Heart right ventricle (tissue), 16 donors: ENCODE measurements at regions of chr2 and their contacts with region 1.

Region 1: GRCh38 chr2:161223139-161223732 is 63.0 kb downstream of the TANK start:
- DNase-seq: no peak
- ATAC-seq: no peak
- H3K4me3 ChIP-seq: no peak overlapping the region
- H3K27ac ChIP-seq: no peak overlapping the region
- H3K4me1 ChIP-seq: no peaks in the 10 kb centered on the region
- H3K27me3 ChIP-seq: no peaks in the 10 kb centered on the region
- CTCF ChIP-seq: peak; percentile 53 to 80 (median 75)

Region 2: GRCh38 chr2:161017780-161018470 is 205.3 kb before region 1 on chr2:
- intact Hi-C with region 1: no loop called
- DNase-seq: no peak
- ATAC-seq: peak in 6 of 8 donors; percentile 13 to 71 (median 46)
- H3K4me3 ChIP-seq: no peak overlapping the region
- H3K27ac ChIP-seq: no peak overlapping the region
- H3K4me1 ChIP-seq: peaks cover 0 to 12% (median 0%) of the 10 kb centered on the region in 9 donors
- H3K27me3 ChIP-seq: no peaks in the 10 kb centered on the region
- CTCF ChIP-seq: no peak

Region 3: GRCh38 chr2:161273038-161273760 is 50.0 kb after region 1 on chr2:
- intact Hi-C with region 1: loop called in 9 of 10 experiments (anchors 2 to 10 kb)
- DNase-seq: peak in 1 of 2 donors; percentile 21
- ATAC-seq: no peak
- H3K4me3 ChIP-seq: no peak overlapping the region
- H3K27ac ChIP-seq: no peak overlapping the region
- H3K4me1 ChIP-seq: no peaks in the 10 kb centered on the region
- H3K27me3 ChIP-seq: no peaks in the 10 kb centered on the region
- CTCF ChIP-seq: peak; percentile 59 to 86 (median 77)

Region 4: DNA sequence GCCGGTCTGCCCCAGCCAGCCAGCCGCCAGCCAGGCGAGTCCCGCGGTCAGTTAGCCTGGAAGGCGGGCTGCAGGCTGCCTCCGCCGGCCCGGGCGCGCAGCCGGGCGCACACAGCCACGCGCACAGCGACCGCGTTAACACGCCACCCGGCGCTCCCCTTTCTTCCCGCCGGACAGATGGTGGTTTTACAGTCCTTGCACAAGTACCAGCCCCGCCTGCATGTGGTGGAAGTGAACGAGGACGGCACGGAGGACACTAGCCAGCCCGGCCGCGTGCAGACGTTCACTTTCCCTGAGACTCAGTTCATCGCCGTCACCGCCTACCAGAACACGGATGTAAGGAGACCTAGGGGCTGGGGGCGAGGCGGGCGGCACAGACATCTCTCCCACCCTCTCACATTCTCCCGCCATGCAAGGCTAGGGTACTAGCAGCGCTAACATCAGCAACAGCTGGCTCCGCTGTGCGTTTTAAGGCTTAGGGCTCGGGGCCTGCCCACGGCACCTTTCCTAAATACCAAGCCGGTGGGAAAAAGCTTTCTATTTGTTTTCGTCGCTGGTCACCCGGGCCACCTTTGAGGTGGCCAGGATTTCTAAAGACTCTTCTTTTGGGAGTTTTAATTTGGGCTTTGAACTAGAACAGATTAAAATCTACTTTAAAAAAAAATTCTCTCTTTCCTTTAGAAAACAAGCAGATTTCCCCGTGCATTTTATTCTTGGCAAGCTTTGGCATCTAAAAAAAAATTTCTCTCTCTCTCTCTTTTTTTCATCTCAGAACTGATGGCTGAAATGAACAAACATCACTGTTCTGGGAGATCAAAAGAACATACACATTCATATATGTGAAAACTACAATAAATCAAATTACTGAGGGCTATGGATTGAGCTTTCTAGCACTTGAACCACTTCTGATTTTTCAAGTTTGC is 195.7 kb after region 1 on chr2:
- intact Hi-C with region 1: no loop called
- DNase-seq: peak in 1 of 2 donors; percentile 11
- ATAC-seq: no peak
- H3K4me3 ChIP-seq: peak overlapping the region in 3 of 10 donors; percentile 8 to 25 (median 11)
- H3K27ac ChIP-seq: no peak overlapping the region
- H3K4me1 ChIP-seq: peaks cover 7 to 55% (median 41%) of the 10 kb centered on the region in 9 donors
- H3K27me3 ChIP-seq: peaks cover 20 to 100% (median 99%) of the 10 kb centered on the region in 7 donors
- CTCF ChIP-seq: no peak